Motor neuron (in vitro differentiated cells): ENCODE measurements at regions of chr9 and their contacts with region 1.

Region 1: GRCh38 chr9:69961830-69962229 is 81.8 kb upstream of the MAMDC2 start:
- ATAC-seq: peak in 7 of 8 experiments; percentile 19 to 66 (median 48)
- H3K4me3 ChIP-seq: no peak overlapping the region
- H3K27ac ChIP-seq: no peak overlapping the region
- H3K4me1 ChIP-seq: peaks cover 12 to 19% of the 10 kb centered on the region in 2 donors

Region 2: DNA sequence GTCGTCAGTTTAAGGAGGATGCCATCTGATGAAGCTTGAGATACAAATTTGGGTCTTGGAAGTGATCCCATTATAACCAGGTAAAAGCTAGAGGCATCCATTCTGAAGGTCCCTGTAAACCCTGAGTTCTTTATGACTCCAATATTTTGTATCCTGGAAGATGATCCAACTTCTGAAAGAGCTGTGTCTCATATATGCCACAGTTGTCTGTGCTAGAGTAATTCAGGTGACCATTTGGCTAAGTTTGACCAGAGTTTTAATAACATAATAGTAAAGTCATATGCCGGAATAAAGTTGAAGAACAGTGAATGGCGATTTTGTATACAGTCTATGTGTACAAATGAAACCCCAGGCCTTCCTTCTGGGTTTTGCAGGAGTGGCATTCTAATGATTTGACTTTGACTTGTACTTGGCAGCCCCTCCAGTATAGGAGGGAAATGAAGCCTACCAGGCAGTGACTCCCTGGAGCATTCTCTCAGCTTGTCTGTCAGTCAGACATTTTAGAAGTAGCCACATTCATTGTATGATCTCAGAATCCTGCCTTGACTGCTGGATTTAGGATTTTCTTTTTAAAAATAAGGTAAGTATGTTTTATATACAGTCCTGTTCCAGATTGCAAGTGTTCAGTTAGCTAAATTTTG is 597.2 kb before region 1 on chr9:
- in situ Hi-C with region 1: no loop called
- ATAC-seq: no peak
- H3K4me3 ChIP-seq: no peak overlapping the region
- H3K27ac ChIP-seq: no peak overlapping the region
- H3K4me1 ChIP-seq: no peaks in the 10 kb centered on the region

Region 3: GRCh38 chr9:69759421-69760277 is 202.2 kb before region 1 on chr9 and contains the start of gene PTAR1:
- in situ Hi-C with region 1: no loop called
- ATAC-seq: peak; percentile 85 to 94 (median 92)
- H3K4me3 ChIP-seq: peak within 1 kb of the TSS; percentile 64 to 77 (median 74)
- H3K27ac ChIP-seq: peak within 1 kb of the TSS; percentile 86 to 96
- H3K4me1 ChIP-seq: peaks cover 13 to 18% of the 10 kb centered on the region in 2 donors
- total RNA-seq, gene PTAR1: 42.1 to 98.3 (median 53.4) TPM

Region 4: DNA sequence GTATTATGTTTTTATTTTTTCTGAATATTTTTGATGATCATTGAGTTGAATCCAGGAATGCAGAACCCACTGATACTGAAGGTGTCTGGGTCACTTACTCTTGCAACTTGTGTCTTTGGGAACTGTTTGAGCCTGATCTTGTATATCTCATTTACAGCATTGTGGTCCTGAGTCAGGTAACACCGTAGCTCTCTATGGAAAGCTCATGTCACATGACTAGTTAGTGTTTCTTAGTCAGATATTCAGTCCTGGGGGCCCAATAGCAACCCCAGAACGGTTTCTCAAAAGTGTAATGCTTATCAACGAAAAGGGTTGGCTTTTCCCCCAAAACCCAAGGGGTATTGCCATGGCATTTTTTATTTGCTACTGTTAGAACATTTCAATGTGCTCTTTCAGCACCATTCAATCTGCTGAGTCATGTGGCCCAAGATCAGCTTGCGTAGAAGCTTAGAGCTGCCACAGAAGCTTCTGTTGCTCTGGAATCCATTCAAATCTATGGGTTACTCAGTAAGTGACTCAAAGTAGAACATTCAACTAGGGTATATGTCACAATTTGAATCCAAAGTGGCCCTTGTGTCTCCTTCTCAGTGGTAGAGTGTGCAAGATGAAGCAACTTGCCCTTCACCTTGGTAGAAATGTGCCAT is 189.9 kb before region 1 on chr9:
- in situ Hi-C with region 1: no loop called
- ATAC-seq: no peak
- H3K4me3 ChIP-seq: no peak overlapping the region
- H3K27ac ChIP-seq: no peak overlapping the region
- H3K4me1 ChIP-seq: no peaks in the 10 kb centered on the region

Region 5: DNA sequence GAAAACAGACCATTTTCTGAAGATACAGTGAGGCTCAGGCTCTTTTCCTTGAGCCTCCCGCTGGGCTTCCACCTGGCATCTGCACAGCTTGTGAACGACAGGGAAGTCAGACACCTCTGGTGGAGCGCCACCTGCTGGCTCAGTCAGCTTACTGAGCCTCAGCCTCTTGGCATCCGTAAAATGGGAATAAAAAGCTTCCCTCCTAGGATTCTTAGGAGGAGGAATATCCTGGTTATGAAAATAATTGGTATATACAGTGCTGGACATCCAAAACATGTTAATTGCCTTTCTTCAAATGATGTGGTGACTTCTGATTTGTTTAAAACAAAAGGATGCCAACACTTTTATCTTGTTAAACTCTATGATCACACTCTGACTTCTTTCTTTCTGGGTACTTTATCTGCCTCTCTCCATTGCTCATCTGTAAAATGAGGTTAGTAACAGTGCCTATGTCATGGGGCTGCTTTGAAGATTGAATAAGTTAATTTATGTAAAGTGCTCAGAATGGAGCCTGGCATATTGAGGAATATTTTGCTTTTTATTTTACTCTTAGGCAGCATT is 149.3 kb after region 1 on chr9:
- in situ Hi-C with region 1: loop called in 5 of 9 experiments (anchors 10 to 25 kb)
- ATAC-seq: peak; percentile 45 to 71 (median 58)
- H3K4me3 ChIP-seq: no peak overlapping the region
- H3K27ac ChIP-seq: no peak overlapping the region
- H3K4me1 ChIP-seq: no peaks in the 10 kb centered on the region

Region 6: DNA sequence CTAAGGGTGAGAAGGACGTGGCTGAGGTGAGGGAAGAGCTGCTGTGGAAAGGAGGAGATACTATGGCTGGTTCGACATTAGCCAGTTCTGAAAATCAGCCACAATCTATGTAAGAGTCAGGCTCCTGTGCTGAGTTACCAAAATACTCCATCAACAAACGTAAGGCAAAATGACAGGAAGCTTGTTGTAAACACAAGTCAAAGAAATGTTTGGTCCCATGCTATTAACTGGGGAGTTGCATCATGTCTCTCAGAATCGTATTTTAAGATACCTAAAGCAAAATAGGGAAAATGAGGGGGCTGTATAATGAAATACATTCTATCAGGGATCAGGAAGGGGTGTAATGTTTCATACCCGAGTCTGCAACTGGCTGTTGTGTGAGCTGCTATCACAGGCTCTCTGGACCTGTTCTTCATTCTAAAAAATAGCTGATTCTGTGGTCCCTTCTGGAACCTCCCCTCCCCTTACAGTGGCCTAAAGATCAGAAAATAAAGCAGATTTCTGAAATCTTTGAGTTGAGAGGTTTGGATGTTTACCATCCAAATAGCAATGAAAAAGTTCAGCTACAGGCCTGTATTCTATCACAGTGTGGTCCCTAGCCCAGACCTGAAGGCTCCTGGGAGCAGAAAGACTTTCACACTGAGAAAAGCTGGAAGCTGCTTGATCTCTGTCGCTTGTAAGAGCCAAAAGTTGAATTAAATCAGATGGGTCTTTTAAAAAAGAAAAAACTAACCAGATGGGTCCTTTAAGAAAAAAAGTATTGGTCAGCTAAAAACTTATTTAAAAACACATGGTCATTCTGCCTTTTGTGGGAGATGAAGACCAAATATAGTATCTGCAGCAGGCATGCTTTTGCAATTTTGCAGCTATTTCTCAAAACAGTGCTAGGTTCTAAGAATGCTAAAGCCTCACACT is 199.1 kb after region 1 on chr9:
- in situ Hi-C with region 1: no loop called
- ATAC-seq: no peak
- H3K4me3 ChIP-seq: no peak overlapping the region
- H3K27ac ChIP-seq: no peak overlapping the region
- H3K4me1 ChIP-seq: peaks cover 3% of the 10 kb centered on the region in 2 donors